ENCODE measurements at regions of chr20 and their contacts with region 1.

Region 1: GRCh38 chr20:48064899-48065298 is 279.6 kb upstream of the SULF2 start:
- DNase-seq: peak; percentile 63
- H3K4me3 ChIP-seq: no peak overlapping the region
- H3K27ac ChIP-seq: no peak overlapping the region
- H3K4me1 ChIP-seq: no peaks in the 10 kb centered on the region
- H3K27me3 ChIP-seq: no peaks in the 10 kb centered on the region
- CTCF ChIP-seq: no peak

Region 2: DNA sequence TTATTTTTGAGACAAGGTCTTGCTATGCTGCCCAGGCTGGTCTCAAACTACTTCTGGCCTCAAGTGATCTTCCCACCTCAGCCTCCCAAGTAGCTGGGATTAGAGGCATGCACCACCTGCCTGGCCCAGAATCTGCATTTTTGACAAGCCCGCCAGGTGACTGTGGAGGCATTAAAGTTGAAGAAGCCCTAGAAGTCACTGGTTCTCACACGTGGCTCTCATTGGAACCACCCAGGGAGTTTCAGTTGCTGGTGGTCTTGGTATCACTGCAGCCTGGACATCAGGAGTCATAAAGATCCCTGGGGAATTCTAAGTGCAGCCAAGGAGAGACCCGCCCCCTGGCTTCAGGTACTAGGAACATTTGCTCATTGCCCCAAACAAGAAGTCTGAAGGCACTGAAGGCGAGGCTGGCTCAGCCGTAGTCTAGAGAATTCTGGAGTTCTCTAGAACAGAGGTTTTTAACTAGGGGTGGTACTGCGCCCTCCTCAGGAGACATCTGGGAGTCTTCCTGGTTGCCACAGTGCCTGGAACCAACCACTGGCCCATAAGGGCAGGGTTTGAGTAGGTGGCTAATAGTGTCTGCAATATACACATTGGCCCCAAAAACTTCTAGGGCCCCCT is 891.2 kb before region 1 on chr20:
- CTCF ChIA-PET with region 1: no interaction called
- dilution Hi-C with region 1: no loop called
- in situ Hi-C with region 1: no loop called
- intact Hi-C with region 1: no loop called
- DNase-seq: no peak
- H3K4me3 ChIP-seq: no peak overlapping the region
- H3K27ac ChIP-seq: no peak overlapping the region
- H3K4me1 ChIP-seq: no peaks in the 10 kb centered on the region
- H3K27me3 ChIP-seq: no peaks in the 10 kb centered on the region
- CTCF ChIP-seq: no peak

Region 3: GRCh38 chr20:48019953-48020653 is 44.8 kb before region 1 on chr20:
- CTCF ChIA-PET with region 1: no interaction called
- dilution Hi-C with region 1: loop called (anchors 5 kb)
- in situ Hi-C with region 1: no loop called
- intact Hi-C with region 1: no loop called
- DNase-seq: no peak
- H3K4me3 ChIP-seq: no peak overlapping the region
- H3K27ac ChIP-seq: no peak overlapping the region
- H3K4me1 ChIP-seq: peaks cover 6% of the 10 kb centered on the region
- H3K27me3 ChIP-seq: no peaks in the 10 kb centered on the region
- CTCF ChIP-seq: no peak

Measured in mammary epithelial cell (primary cell).